ENCODE measurements at regions of chr16 and their contacts with region 1.

Region 1: GRCh38 chr16:70523076-70523742 is at the start of gene COG4:
- DNase-seq: peak; percentile 97
- H3K4me3 Mint-ChIP-seq: peak within 1 kb of the TSS; percentile 92
- H3K27ac Mint-ChIP-seq: peak within 1 kb of the TSS; percentile 96
- H3K4me1 Mint-ChIP-seq: peaks cover 41% of the 10 kb centered on the region
- H3K27me3 Mint-ChIP-seq: no peaks in the 10 kb centered on the region
- total RNA-seq, gene COG4: 38.3 and 42.1 TPM in 2 replicates

Region 2: DNA sequence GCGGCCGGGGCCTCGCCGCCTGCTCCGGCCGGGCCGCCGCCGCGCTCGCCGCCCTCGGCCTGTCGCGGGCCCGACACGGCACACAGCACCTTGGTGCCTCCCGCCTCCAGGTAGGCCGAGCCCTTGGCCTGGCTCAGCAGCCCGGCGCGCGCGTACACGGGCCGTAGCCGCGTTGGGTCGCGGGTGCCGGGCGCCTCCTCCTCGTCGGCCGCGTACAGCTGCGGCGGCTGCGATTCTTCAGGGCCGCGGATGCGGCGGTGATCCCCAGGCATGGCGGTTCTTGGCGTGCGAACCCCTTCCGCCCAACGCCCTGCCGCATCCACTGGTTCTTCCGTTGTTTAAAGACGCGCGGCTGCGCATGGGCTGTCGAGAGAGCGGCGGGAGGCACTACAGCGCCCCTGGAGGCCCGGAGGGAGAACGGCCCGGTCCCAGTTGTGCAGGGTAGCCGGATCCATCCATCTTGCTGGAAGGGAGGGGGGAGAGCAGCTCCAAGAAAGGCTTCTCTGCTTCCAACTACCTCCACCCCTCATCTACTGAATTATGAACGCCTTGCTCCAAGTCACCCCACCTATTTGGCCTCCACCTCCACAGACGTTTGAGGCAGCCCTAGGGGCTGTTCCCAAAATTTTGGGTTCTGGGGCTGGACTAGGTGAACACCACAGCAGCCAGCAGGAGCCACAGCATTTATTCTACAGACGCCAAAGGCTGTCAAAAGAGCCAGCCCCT is 271.4 kb before region 1 on chr16 and contains the start of gene EXOSC6:
- intact Hi-C with region 1: loop called (anchors 10 kb)
- DNase-seq: peak; percentile 98
- H3K4me3 Mint-ChIP-seq: peak within 1 kb of the TSS; percentile 91
- H3K27ac Mint-ChIP-seq: peak within 1 kb of the TSS; percentile 96
- H3K4me1 Mint-ChIP-seq: peaks cover 15% of the 10 kb centered on the region
- H3K27me3 Mint-ChIP-seq: no peaks in the 10 kb centered on the region
- total RNA-seq, gene EXOSC6: 38.0 and 39.2 TPM in 2 replicates

Region 3: DNA sequence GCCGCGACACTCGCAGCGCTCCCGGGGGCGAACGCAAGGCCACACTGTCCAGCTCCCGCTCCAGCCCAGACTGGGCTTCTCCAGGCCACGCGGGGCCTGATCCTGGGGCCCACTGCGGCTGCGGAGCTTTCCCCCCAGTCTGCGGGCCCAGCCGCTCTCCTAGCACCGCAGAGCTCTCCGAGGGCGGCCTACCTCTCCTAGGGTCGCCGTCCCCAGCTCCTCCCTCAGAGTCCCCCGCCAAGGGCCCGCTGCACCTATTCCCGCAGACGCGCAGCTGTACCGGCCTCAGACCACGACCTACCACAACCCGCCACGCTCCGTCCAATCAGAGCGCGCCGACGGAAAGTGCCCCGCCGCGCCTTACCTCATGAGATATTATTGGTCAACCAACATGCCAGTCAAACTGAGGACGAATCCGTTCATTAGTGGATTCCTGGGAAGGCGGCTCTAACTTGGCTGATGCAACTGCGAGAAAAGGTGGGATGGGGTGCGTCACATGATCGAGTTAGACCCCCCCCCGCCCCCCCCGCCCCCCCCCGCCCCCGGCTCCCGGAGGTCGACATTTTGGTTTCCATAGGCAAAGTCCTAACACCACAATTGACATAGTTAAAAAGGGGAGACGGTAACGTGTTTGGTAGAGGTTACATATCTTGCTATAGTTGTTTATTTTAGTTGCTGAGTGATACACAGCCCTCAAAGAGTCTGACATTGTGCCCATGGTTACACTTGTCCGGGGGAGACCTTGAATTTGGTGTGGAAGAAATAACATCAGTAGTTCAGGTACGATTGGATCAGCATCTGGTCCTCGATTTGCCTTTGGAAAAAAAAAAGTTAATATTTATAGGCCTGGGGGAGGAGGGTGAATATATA is 233.7 kb before region 1 on chr16 and contains the start of gene AARS1:
- intact Hi-C with region 1: loop called (anchors 1 kb)
- DNase-seq: peak; percentile 99
- H3K4me3 Mint-ChIP-seq: peak within 1 kb of the TSS; percentile 99
- H3K27ac Mint-ChIP-seq: peak within 1 kb of the TSS; percentile 99
- H3K4me1 Mint-ChIP-seq: peaks cover 22% of the 10 kb centered on the region
- H3K27me3 Mint-ChIP-seq: peaks cover 2% of the 10 kb centered on the region
- total RNA-seq, gene AARS1: 115 and 117 TPM in 2 replicates

Region 4: DNA sequence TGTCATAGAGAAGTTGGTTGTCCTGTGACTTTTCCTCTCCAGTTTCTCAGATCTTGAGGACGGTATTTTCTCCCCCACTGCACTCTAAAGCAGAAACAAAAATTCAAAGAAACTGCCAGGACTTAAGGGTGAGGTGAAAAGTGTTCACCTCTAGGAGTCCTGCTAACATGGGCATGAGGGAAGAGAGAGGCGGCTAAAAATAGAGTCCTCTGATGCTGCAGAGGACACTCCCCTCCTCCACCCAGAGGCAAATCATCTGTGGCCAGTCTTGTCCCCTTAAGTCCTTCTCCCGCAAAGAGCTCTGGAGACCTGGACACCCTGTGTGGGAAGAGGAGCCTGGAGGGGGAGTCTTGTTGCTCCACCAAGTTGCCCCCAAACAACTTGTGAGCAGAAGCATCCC is 181.2 kb before region 1 on chr16:
- intact Hi-C with region 1: loop called (anchors 1 kb)
- DNase-seq: no peak
- H3K4me3 Mint-ChIP-seq: no peak overlapping the region
- H3K27ac Mint-ChIP-seq: peak overlapping the region; percentile 53
- H3K4me1 Mint-ChIP-seq: peaks cover 7% of the 10 kb centered on the region
- H3K27me3 Mint-ChIP-seq: no peaks in the 10 kb centered on the region

Region 5: DNA sequence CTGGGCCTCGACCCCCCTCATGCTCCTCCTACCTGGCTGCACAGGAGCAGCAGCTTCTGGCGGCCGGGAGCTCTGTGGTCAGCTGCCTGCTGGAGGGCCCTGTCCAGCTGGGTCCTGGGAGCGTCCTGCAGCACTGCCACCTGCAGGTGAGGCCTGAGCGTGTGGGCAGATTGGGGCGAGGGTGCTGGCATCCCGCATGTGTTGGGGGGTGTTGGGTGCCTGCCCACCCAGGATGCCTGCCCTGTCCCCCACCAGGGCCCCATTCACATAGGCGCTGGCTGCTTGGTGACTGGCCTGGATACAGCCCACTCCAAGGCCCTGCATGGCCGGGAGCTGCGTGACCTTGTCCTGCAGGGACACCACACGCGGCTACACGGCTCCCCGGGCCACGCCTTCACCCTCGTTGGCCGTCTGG is 52.3 kb before region 1 on chr16:
- intact Hi-C with region 1: loop called (anchors 1 kb)
- DNase-seq: no peak
- H3K4me3 Mint-ChIP-seq: no peak overlapping the region
- H3K27ac Mint-ChIP-seq: no peak overlapping the region
- H3K4me1 Mint-ChIP-seq: peaks cover 2% of the 10 kb centered on the region
- H3K27me3 Mint-ChIP-seq: no peaks in the 10 kb centered on the region